PC-9 (cell line): ENCODE measurements at regions of chr5 and their contacts with region 1.

Region 1: DNA sequence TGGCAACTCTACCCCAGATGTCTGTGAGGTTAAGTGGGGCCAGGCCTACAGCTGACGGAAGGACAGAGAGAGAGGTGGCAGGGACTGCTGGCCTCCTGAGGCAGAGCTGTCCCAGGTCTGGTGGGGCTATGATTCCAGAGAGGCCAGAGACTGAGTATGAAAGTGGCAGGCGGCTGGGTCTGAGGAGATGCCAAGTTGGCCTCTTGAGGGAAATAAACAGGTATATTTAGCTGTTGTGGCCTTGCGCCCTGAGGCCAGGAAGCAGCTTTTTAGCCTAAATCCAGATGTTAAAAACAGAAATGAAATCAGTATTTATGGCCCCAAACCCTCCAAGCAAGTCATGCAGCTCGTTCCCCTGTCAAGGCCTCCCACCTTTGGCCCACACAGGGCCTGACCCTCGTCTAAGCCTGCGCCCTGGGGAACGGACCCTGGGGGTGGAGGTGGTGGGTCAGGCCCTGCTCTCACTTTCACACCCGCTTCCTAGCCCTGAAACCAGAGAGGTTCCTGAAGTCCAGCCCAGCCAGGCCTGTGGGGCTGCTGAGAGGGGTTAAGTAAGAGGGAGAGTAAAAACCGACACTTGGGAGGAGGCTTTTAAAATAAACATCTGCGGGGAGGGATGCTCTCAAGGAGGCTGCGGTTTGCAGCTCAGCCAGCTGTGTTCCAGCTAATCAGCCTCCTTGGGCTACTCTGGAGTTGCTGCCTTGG is 18.7 kb downstream of the PCDHGC5 start:
- DNase-seq: no peak
- H3K4me3 ChIP-seq: no peak overlapping the region
- H3K27ac ChIP-seq: no peak overlapping the region
- H3K4me1 ChIP-seq: peaks cover 18% of the 10 kb centered on the region
- H3K27me3 ChIP-seq: no peaks in the 10 kb centered on the region
- CTCF ChIP-seq: no peak

Region 2: GRCh38 chr5:141439411-141440141 is 68.0 kb before region 1 on chr5:
- CTCF ChIA-PET with region 1: interaction called, 11 read pairs
- POLR2A ChIA-PET with region 1: no interaction called
- intact Hi-C with region 1: no loop called
- DNase-seq: peak in 1 of 2 experiments; percentile 6
- H3K4me3 ChIP-seq: no peak overlapping the region
- H3K27ac ChIP-seq: no peak overlapping the region
- H3K4me1 ChIP-seq: no peaks in the 10 kb centered on the region
- H3K27me3 ChIP-seq: peaks cover 27% of the 10 kb centered on the region; the same call in 1 of the 2 replicates
- CTCF ChIP-seq: no peak

Region 3: GRCh38 chr5:141517880-141518617 is 10.5 kb after region 1 on chr5:
- CTCF ChIA-PET with region 1: no interaction called
- POLR2A ChIA-PET with region 1: interaction called, 10 read pairs
- intact Hi-C with region 1: no loop called
- DNase-seq: no peak
- H3K4me3 ChIP-seq: no peak overlapping the region
- H3K27ac ChIP-seq: no peak overlapping the region
- H3K4me1 ChIP-seq: peaks cover 43% of the 10 kb centered on the region
- H3K27me3 ChIP-seq: no peaks in the 10 kb centered on the region
- CTCF ChIP-seq: no peak

Region 4: GRCh38 chr5:141650851-141651727 is 143.6 kb after region 1 on chr5 and contains the start of gene FCHSD1:
- CTCF ChIA-PET with region 1: no interaction called
- POLR2A ChIA-PET with region 1: no interaction called
- intact Hi-C with region 1: no loop called
- DNase-seq: peak; percentile 61 to 86
- H3K4me3 ChIP-seq: peak within 1 kb of the TSS; percentile 69
- H3K27ac ChIP-seq: no peak within 1 kb of the TSS
- H3K4me1 ChIP-seq: peaks cover 15% of the 10 kb centered on the region
- H3K27me3 ChIP-seq: no peaks in the 10 kb centered on the region
- CTCF ChIP-seq: no peak
- total RNA-seq, gene FCHSD1: 36.4 and 36.6 TPM in 2 replicates